HepG2 (cell line): ENCODE measurements at regions of chr1 and their contacts with region 1.

Region 1: DNA sequence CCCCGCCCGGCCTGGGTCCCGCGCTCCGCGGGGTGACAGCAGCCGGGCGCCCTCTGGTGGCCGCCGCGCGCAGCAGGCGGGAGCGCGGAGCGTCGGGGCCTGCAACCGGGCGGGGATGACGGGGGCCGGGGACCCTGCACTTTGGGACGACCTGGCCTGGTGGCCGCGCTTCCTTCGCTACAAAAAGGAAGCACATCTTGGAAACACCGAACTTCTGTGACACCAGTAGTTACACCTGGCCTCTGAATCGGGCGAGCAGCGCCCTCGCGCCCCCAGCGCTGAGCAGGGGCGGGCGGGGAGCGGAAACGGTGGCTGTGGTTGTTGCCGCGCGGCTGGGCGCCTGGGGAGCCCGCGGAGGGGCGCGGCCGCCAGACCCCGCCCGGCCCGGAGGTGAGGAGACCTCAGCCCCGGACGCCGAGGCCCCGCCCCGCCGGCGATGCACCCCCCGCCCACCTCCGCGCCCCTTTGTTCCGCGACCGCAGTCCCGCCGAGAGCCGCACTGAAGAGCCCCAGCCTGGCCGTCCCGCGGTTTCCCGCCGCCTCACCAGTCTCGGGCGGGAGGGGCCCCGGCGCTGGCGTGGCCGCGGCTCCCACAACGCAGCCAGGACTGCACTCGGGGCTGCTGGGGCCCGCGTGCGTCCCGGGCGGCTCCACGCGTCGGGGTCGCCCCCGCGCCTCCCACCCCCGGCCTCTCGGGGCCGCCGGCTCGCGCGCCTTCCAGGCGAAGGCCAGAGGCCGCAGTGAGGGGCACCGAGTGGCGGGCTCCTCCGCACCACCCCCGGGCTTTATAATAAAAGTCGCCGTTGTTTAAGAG is 59.3 kb downstream of the H3-3A start:
- DNase-seq: peak; percentile 49
- ATAC-seq: peak; percentile 69
- H3K4me3 ChIP-seq: peak overlapping the region; percentile 49 to 81 (median 78); a peak in 5 of 6 replicates
- H3K27ac ChIP-seq: peak overlapping the region; percentile 88
- H3K4me1 ChIP-seq: peaks cover 51% of the 10 kb centered on the region
- H3K27me3 ChIP-seq: peaks cover 2 to 41% of the 10 kb centered on the region in 2 experiments; a peak in 4 of 5 replicates
- CTCF ChIP-seq: peak; percentile 78
- EP300 ChIP-seq: no peak
- POLR2A ChIP-seq: peak; percentile 45 to 56; a peak in 2 of 4 replicates
- RAD21 ChIP-seq: peak; percentile 91

Region 2: GRCh38 chr1:226083302-226084101 is 38.3 kb before region 1 on chr1:
- CTCF ChIA-PET with region 1: no interaction called
- POLR2A ChIA-PET with region 1: interaction called, 13 read pairs
- in situ Hi-C with region 1: no loop called
- intact Hi-C with region 1: loop called (anchors 1 kb)
- DNase-seq: peak; percentile 56
- ATAC-seq: peak; percentile 84
- H3K4me3 ChIP-seq: peak overlapping the region; percentile 56 to 74 (median 73)
- H3K27ac ChIP-seq: no peak overlapping the region
- H3K4me1 ChIP-seq: peaks cover 14% of the 10 kb centered on the region
- H3K27me3 ChIP-seq: peaks cover 0 to 6% of the 10 kb centered on the region in 2 experiments; a peak in 2 of 5 replicates
- CTCF ChIP-seq: no peak
- EP300 ChIP-seq: no peak
- POLR2A ChIP-seq: peak in 1 of 2 experiments; percentile 68; a peak in 2 of 4 replicates
- RAD21 ChIP-seq: no peak

Region 3: GRCh38 chr1:226166341-226166740 is 44.5 kb after region 1 on chr1:
- CTCF ChIA-PET with region 1: no interaction called
- POLR2A ChIA-PET with region 1: interaction called, 3 read pairs
- in situ Hi-C with region 1: no loop called
- intact Hi-C with region 1: loop called (anchors 5 kb)
- DNase-seq: no peak
- ATAC-seq: no peak
- H3K4me3 ChIP-seq: no peak overlapping the region
- H3K27ac ChIP-seq: no peak overlapping the region
- H3K4me1 ChIP-seq: 0 out of 2 replicates have a peak, but pooled peaks cover 6% of the 10 kb centered on the region
- H3K27me3 ChIP-seq: no peaks in the 10 kb centered on the region
- CTCF ChIP-seq: no peak
- EP300 ChIP-seq: no peak
- POLR2A ChIP-seq: no peak
- RAD21 ChIP-seq: no peak

Region 4: DNA sequence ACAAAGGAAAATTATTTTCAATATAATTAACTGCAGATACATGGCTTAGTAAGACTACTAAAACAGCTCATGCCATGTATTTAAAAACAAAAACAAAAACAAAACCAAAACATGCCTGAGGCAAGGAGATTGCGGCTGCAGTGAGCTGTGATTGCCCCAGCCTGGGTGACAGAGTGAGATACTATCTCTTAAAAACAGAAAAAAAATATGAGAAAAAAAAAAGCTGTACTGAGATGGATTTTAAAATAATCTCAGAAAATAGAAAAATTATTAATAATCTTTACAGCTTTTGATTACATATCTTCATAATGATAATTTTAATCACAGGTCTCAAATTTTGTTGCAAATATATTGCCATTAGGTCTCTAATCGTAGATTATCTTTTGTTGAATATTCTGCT is 211.2 kb after region 1 on chr1:
- CTCF ChIA-PET with region 1: no interaction called
- POLR2A ChIA-PET with region 1: no interaction called
- in situ Hi-C with region 1: loop called (anchors 10 kb)
- intact Hi-C with region 1: loop called (anchors 5 kb)
- DNase-seq: no peak
- ATAC-seq: peak; percentile 55; the same call in 2 of the 3 replicates
- H3K4me3 ChIP-seq: peak overlapping the region; percentile 20 to 51 (median 31); a peak in 3 of 6 replicates
- H3K27ac ChIP-seq: no peak overlapping the region
- H3K4me1 ChIP-seq: peaks cover 11% of the 10 kb centered on the region
- H3K27me3 ChIP-seq: no peaks in the 10 kb centered on the region; a peak in 1 of 5 replicates
- CTCF ChIP-seq: no peak
- EP300 ChIP-seq: no peak
- POLR2A ChIP-seq: no peak
- RAD21 ChIP-seq: no peak